Lower leg skin (tissue), 4 donors: ENCODE measurements at regions of chr7 and their contacts with region 1.

Region 1: GRCh38 chr7:120987683-120988590 is 574 bp upstream of the CPED1 start:
- DNase-seq: peak; percentile 89 to 97
- H3K4me3 ChIP-seq: peak overlapping the region; percentile 24
- CTCF ChIP-seq: peak in 1 of 3 donors; percentile 82
- POLR2A ChIP-seq: no peak

Region 2: DNA sequence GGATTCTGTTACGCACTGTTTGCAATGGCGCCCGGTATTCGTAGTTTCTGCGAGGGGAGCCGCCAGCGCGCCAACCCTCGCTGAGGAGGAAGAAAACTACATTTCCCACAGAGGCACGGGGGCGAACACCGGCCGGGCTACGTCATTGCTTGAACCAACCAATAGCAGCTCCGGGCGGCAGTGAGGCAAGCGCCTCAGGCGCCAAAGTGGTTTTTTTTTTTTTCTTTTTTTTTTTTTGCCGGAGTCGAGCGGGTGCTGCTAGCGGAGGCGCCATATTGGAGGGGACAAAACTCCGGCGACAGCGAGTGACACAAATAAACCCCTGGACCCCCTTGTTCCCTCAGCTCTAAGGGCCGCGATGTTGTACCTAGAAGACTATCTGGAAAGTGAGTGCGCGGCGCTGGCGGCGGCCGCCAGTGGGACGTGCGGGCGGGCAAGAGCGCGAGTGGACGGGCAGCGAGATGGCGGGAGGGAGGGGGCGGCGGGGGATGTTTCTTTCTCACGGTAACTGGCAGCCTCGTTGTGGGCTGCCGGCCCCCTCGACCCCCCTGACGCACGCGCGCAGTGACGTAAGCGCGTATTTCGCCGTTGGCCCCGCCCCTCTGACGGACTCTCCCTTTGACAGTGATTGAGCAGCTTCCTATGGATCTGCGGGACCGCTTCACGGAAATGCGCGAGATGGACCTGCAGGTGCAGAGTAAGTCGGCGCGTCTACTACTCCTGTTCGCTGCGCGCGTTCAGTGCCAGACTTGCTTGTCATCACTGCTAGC is 37.2 kb before region 1 on chr7 and contains the start of gene ING3:
- intact Hi-C with region 1: loop called (anchors 2 kb)
- DNase-seq: peak; percentile 97 to 99
- H3K4me3 ChIP-seq: peak within 1 kb of the TSS; percentile 38
- CTCF ChIP-seq: no peak
- POLR2A ChIP-seq: no peak
- total RNA-seq, gene ING3: 6.6 to 11.4 (median 9.8) TPM

Region 3: GRCh38 chr7:120973849-120974248 is 14.1 kb before region 1 on chr7:
- intact Hi-C with region 1: no loop called
- DNase-seq: no peak
- H3K4me3 ChIP-seq: no peak overlapping the region
- CTCF ChIP-seq: no peak
- POLR2A ChIP-seq: no peak